Activated naive CD4-positive, alpha-beta T cell treated with anti-CD3 and anti-CD28 coated beads, Interleukin-2, amount 10 ng/mL, durations not matched to agents 7 days and 5 days (primary cell): ENCODE measurements at regions of chr19 and their contacts with region 1.

Region 1: DNA sequence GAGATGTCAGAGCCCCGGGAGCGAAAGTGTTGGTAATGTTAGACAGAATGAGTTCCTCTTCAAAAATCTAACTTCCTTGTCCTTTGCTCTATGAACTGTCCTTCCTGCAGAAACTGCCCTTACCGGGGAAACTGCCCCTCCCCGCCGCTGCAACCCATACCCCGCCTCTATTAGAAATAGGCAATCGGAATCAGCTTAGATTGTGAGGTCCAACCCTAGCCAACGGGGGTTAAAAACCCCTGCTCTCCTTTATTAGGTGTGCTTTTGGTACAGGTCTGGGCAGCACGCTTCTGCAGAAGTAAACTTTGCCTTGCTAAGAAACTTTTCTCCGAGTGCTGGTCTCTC is 11.5 kb upstream of the CAPNS1 start:
- DNase-seq: no peak
- H3K4me3 Mint-ChIP-seq: peak overlapping the region; percentile 79
- H3K27ac Mint-ChIP-seq: peak overlapping the region; percentile 94
- H3K4me1 Mint-ChIP-seq: peaks cover 36% of the 10 kb centered on the region
- H3K27me3 Mint-ChIP-seq: no peaks in the 10 kb centered on the region

Region 2: GRCh38 chr19:36114763-36115452 is 13.5 kb before region 1 on chr19 and contains the start of gene POLR2I:
- CTCF ChIA-PET with region 1: interaction called, 10 read pairs
- DNase-seq: peak; percentile 99
- H3K4me3 Mint-ChIP-seq: peak within 1 kb of the TSS; percentile 84
- H3K27ac Mint-ChIP-seq: peak within 1 kb of the TSS; percentile 93
- H3K4me1 Mint-ChIP-seq: peaks cover 43% of the 10 kb centered on the region
- H3K27me3 Mint-ChIP-seq: peaks cover 9% of the 10 kb centered on the region

Region 3: GRCh38 chr19:36139473-36140303 is 11.3 kb after region 1 on chr19 and contains the start of gene CAPNS1:
- CTCF ChIA-PET with region 1: interaction called, 28 read pairs
- DNase-seq: peak; percentile 94
- H3K4me3 Mint-ChIP-seq: peak within 1 kb of the TSS; percentile 96
- H3K27ac Mint-ChIP-seq: peak within 1 kb of the TSS; percentile 96
- H3K4me1 Mint-ChIP-seq: peaks cover 44% of the 10 kb centered on the region
- H3K27me3 Mint-ChIP-seq: peaks cover 8% of the 10 kb centered on the region

Region 4: DNA sequence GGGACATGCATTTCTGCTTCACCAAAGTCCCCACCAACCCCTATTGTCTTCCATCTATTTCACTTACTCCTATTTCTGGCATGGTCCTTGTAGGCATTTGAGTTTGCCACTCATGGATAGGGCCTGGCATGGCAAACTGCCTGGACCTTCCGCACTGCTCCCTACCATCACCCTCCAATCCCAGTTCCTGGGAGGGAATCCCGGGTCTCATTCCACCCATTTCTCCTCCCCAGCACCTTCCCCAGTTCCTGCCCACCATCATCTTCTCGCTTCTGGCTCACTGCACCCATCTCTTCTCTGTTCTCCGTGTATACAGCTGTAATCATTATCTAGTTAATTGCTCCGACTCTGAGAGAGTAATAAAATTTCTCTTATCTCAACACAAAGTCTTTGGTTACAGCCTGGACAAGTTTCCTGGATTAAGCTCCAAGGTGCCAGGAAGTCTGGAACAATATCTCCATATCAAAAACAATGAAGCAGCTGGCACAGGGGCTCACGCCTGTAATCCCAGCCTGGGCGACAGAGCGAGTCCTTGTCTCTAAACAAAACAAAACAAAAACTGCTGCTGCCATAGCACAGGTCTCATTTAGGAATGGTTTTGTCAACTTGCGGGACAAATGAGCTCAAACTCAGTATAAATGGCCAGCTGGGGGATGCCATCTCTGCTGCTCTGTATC is 40.9 kb after region 1 on chr19:
- CTCF ChIA-PET with region 1: interaction called, 54 read pairs
- DNase-seq: no peak
- H3K4me3 Mint-ChIP-seq: no peak overlapping the region
- H3K27ac Mint-ChIP-seq: no peak overlapping the region
- H3K4me1 Mint-ChIP-seq: peaks cover 5% of the 10 kb centered on the region
- H3K27me3 Mint-ChIP-seq: peaks cover 3% of the 10 kb centered on the region

Region 5: GRCh38 chr19:36266342-36266961 is 138.1 kb after region 1 on chr19:
- CTCF ChIA-PET with region 1: no interaction called
- DNase-seq: no peak
- H3K4me3 Mint-ChIP-seq: no peak overlapping the region
- H3K27ac Mint-ChIP-seq: no peak overlapping the region
- H3K4me1 Mint-ChIP-seq: no peaks in the 10 kb centered on the region
- H3K27me3 Mint-ChIP-seq: no peaks in the 10 kb centered on the region